ENCODE measurements at regions of chr1 and their contacts with region 1.

Region 1: DNA sequence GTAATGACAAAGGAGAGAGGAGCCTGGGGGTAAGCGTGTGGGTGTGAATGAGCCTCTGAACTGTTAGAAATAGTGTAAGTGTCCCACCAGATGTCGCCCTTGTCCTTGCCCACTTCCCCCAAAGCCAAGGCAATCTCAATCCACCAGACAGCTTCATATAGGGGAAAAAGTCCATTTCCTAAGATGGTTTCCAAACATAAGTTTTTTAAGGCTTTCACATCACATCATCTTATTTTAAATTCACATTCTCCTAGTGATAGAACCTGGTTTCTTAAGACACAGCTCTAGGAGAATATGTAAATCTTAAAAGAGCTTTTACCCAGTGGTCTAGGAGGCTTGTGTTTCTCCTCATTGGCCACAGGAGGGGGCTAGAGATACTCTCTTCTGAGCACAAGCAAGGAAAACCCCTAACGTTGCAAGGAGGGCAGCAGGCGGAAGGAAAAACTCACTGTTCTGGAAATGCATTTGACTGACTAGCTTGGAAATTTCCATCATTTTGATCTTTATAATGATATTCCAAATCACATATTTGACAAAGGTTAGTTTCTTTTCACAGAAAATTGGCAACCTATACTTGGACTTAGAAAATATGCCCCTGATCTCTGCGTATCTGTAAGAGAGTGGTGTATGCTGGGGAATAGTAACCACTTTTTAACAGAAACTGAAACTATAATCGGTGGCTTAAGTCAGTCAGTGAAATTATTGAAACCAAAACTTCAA is 51.9 kb upstream of the LPAR3 start:
- DNase-seq: peak; percentile 48
- ATAC-seq: peak; percentile 92
- H3K4me3 Mint-ChIP-seq: no peak overlapping the region
- H3K27ac Mint-ChIP-seq: peak overlapping the region; percentile 36; the same call in 1 of the 2 replicates
- H3K4me1 Mint-ChIP-seq: peaks cover 26% of the 10 kb centered on the region
- H3K27me3 Mint-ChIP-seq: no peaks in the 10 kb centered on the region
- CTCF ChIP-seq: peak; percentile 66

Region 2: GRCh38 chr1:84928979-84929378 is 15.9 kb before region 1 on chr1:
- CTCF ChIA-PET with region 1: interaction called, 21 read pairs
- POLR2A ChIA-PET with region 1: no interaction called
- DNase-seq: no peak
- ATAC-seq: no peak
- H3K4me3 Mint-ChIP-seq: no peak overlapping the region
- H3K27ac Mint-ChIP-seq: peak overlapping the region; percentile 64; the same call in 1 of the 2 replicates
- H3K4me1 Mint-ChIP-seq: peaks cover 10% of the 10 kb centered on the region
- H3K27me3 Mint-ChIP-seq: no peaks in the 10 kb centered on the region; the same call in 1 of the 2 replicates
- CTCF ChIP-seq: no peak

Region 3: DNA sequence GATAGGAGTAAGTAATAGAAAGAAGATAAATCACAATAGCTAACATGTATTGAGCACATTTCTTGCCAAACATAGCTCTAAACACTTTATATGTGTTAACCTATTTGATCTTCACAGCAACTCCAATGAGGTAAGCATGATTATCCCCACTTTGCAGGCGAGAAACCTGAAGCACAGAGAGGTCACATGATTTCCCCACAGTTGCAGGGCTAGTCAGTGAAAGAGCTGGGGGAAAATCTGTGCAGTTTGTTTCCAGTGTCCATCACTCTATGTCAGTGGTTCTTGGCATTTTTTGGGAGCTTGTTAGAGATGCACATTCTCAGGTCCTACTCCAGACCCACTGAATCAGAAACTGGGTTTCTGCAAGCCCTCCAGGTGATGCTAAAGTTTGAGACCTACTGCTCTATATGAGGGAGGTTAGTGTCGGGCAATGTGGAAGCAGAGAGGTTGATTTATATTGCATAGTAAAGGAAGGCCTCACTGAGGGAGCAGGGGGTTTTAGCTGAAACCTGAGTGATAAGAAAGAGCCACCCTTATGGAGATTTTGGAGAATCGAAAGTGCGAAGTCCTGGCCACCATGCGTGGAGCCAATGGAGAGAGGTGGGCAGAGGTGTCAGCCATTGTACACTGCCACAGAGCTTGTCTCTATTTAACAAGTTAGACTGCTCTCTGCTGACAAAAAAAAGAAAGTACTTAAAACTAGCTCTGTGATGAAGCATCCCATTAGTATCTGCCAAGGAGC is 82.5 kb after region 1 on chr1:
- CTCF ChIA-PET with region 1: interaction called, 90 read pairs
- POLR2A ChIA-PET with region 1: no interaction called
- DNase-seq: no peak
- ATAC-seq: peak; percentile 72
- H3K4me3 Mint-ChIP-seq: no peak overlapping the region
- H3K27ac Mint-ChIP-seq: no peak overlapping the region
- H3K4me1 Mint-ChIP-seq: no peaks in the 10 kb centered on the region
- H3K27me3 Mint-ChIP-seq: no peaks in the 10 kb centered on the region
- CTCF ChIP-seq: no peak

Region 4: DNA sequence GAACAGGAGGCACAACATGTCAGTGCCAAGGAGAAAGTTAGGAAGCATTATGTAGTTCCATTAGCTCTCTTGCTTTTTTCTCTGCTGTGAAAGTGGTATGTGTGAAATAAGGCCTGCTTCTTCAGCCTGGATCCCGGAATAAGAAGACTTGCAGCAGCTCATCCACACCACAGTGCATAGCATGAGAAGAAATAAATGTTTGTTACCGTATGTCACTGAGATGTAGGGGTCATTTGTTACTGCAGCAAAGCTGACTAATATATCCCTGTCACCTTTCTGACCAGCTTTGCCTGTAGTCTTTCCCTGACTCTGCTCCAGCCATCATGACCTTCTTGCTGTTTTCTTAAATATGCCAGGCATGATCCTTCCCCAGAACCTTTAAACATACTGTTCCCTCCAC is 123.9 kb after region 1 on chr1:
- CTCF ChIA-PET with region 1: interaction called, 21 read pairs
- POLR2A ChIA-PET with region 1: no interaction called
- DNase-seq: no peak
- ATAC-seq: no peak
- H3K4me3 Mint-ChIP-seq: no peak overlapping the region
- H3K27ac Mint-ChIP-seq: no peak overlapping the region
- H3K4me1 Mint-ChIP-seq: peaks cover 12% of the 10 kb centered on the region
- H3K27me3 Mint-ChIP-seq: no peaks in the 10 kb centered on the region
- CTCF ChIP-seq: no peak

Region 5: GRCh38 chr1:85230305-85230980 is 285.5 kb after region 1 on chr1:
- CTCF ChIA-PET with region 1: interaction called, 14 read pairs
- POLR2A ChIA-PET with region 1: no interaction called
- DNase-seq: peak; percentile 25
- ATAC-seq: peak; percentile 98
- H3K4me3 Mint-ChIP-seq: no peak overlapping the region
- H3K27ac Mint-ChIP-seq: no peak overlapping the region
- H3K4me1 Mint-ChIP-seq: peaks cover 28% of the 10 kb centered on the region
- H3K27me3 Mint-ChIP-seq: no peaks in the 10 kb centered on the region
- CTCF ChIP-seq: no peak